Ascending aorta (tissue), 2 donors: ENCODE measurements at regions of chr17 and their contacts with region 1.

Region 1: DNA sequence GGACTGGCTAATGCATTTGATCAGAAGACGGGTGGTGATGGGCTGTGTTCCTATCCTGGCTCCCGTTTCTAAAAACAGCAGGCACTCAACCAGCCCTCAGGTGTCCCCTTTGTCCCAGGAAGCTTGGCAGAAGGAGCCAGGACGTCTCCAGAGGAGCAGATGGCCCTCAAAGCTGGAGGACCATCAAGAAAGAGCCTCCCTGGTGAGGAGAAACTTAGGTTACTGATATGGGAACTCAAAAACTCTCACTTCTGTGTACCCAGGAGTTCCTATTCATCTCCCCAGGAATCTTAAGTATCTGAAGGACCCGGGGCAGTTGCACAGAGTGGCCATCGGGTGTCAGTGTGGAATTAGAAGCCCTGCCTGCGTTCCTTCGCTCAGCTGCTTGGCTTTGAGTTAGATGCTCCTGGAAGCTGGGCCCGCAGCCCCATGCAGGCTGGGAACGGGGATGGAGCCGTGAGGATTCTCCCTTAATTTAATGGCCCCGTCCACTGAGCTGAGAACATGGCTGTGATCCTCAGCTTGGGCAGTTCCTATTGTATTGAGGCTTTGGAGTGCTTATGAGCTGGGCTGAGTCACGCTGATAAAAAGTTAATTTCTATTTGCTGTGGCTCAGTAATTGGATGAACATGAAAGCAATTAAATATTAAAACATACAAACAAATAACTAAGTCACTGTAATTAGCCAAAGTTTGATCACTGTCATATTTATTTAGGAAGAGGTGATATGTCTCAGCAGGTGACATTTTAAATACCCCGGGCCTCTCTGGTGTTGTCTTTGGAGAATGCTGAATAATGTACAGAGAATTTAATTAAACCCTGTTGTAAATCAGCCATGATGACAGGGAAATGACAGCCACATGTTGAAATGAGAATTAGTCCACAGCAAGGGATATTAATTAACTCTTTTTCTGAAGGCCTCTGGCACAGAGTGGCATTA is 402.1 kb downstream of the SEC14L1 start:
- DNase-seq: peak; percentile 22 to 91
- H3K4me3 ChIP-seq: no peak overlapping the region
- H3K27ac ChIP-seq: peak overlapping the region in 1 of 2 donors; percentile 48
- H3K4me1 ChIP-seq: peaks cover 4 to 10% of the 10 kb centered on the region in 2 donors
- H3K27me3 ChIP-seq: no peaks in the 10 kb centered on the region
- CTCF ChIP-seq: peak; percentile 87 to 93 (median 93)

Region 2: DNA sequence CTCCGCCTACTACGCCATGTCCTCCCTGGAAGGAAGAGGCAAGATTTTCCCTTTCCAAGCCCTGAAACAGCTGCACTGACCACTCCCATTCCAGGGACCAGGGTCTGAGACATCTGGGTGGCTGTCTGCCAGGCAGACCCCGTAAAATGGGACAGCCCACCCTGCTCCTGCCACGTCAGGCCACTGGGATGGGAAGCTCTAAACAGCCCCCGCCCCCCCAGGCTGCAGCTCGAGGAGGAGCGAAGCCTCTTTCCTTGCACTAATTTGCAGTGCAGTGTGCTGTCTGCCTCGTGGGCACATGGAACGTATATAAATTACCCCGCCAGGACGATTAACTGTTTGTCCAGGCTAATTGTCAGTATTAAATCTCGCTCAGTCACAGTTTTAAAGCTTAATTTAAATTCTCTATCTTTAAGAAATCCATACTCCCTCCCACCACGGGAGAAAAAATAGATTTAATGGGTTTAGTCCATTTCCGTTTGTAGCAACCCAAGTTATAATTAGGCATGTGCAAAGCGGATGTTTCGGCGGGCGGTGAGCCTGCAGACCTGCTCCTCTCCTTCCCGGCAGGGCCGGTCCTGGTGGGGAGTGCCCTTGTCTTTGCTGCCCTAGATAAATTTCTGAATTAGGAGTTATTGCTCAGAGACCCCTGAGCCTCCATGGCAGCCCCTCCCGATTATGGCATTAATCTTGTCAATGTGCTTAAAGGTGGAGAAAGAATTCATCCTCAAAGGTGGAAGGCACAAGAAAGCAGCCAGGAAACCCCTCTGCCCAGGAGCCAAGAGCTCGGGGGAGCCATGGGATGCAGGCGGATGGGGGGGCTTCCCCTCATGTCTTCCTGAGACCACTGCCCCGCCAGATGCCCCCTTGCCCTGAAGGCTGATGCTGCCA is 147.7 kb after region 1 on chr17:
- intact Hi-C with region 1: no loop called
- DNase-seq: peak in 1 of 2 donors; percentile 60
- H3K4me3 ChIP-seq: peak overlapping the region in 1 of 2 donors; percentile 50
- H3K27ac ChIP-seq: no peak overlapping the region
- H3K4me1 ChIP-seq: peaks cover 0 to 8% of the 10 kb centered on the region in 2 donors
- H3K27me3 ChIP-seq: no peaks in the 10 kb centered on the region
- CTCF ChIP-seq: no peak

Region 3: GRCh38 chr17:77734341-77735080 is 191.7 kb after region 1 on chr17:
- intact Hi-C with region 1: loop called (anchors 1 kb)
- DNase-seq: peak; percentile 45 to 94
- H3K4me3 ChIP-seq: peak overlapping the region in 1 of 2 donors; percentile 47
- H3K27ac ChIP-seq: peak overlapping the region; percentile 85 to 87
- H3K4me1 ChIP-seq: peaks cover 21 to 44% of the 10 kb centered on the region in 2 donors
- H3K27me3 ChIP-seq: no peaks in the 10 kb centered on the region
- CTCF ChIP-seq: peak in 1 of 3 experiments; percentile 29

Region 4: DNA sequence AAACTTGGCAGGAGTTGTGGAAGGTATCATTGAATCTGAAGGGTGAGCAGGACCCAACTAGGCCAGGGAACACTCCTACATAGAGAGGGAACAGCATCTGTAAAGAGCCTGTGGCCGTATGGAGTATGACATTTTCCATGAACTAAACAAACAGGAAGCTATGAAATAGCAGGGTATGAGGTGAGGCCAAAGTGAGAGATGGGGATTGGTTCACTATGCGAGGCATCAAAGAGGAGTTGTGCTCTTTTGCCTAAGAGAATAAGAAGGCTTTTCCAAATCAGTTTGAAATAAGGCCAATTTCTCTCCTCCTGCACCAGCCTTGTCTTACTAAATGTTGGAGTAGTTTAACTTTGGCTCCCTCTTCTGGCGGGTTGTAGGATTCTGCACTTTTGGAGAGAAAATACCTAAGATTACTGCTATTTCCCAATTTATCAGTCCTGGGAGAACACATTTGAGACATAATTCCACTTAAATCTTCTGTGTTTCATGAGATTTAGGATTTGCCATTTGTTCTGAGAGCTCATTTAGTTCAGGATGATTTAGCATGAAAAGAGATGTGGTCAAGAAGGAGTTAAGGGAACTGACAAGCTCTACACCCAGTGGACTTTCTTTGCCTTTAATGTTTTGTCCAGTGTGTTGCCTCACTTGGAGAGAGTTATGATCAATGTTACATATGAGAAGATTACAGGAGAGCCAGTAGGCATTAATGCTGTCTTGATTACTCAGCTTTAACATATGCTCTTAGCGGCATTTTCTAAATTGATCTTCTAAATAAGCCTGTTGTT is 471.1 kb after region 1 on chr17:
- intact Hi-C with region 1: loop called (anchors 1 kb)
- DNase-seq: peak in 1 of 2 donors; percentile 83
- H3K4me3 ChIP-seq: no peak overlapping the region
- H3K27ac ChIP-seq: no peak overlapping the region
- H3K4me1 ChIP-seq: peaks cover 0 to 5% of the 10 kb centered on the region in 2 donors
- H3K27me3 ChIP-seq: no peaks in the 10 kb centered on the region
- CTCF ChIP-seq: peak; percentile 64 to 80 (median 66)